Vagina (tissue), 2 donors: ENCODE measurements at regions of chr11 and their contacts with region 1.

Region 1: GRCh38 chr11:130574740-130575139 is 126.3 kb downstream of the ADAMTS15 start:
- DNase-seq: no peak
- H3K4me3 ChIP-seq: no peak overlapping the region
- H3K27ac ChIP-seq: no peak overlapping the region
- H3K4me1 ChIP-seq: no peaks in the 10 kb centered on the region
- H3K27me3 ChIP-seq: no peaks in the 10 kb centered on the region
- CTCF ChIP-seq: no peak
- POLR2A ChIP-seq: no peak

Region 2: GRCh38 chr11:129976328-129976727 is 598.4 kb before region 1 on chr11:
- intact Hi-C with region 1: loop called (anchors 5 kb)
- DNase-seq: no peak
- H3K4me3 ChIP-seq: no peak overlapping the region
- H3K27ac ChIP-seq: no peak overlapping the region
- H3K4me1 ChIP-seq: no peaks in the 10 kb centered on the region
- H3K27me3 ChIP-seq: no peaks in the 10 kb centered on the region
- CTCF ChIP-seq: no peak
- POLR2A ChIP-seq: no peak

Region 3: DNA sequence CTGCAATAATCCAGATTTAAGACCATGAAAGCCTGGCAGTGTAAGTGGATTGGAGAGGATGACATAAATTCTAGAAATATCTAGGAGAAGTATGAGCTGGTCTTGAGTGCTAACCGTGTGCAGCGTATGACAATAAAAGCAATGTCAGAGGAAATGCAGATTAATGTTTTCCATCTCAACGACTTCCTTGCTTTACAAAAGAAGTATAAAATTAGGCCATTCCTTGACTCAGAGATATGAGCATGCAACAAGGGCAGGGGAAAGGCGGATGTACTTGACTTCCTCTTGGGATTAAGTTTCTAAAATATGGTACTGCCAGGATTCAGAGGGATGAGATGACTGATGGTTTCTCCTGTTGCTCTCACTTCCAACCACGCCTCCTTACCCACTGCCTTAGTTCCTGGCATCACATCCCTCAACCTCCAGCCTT is 94.0 kb before region 1 on chr11:
- intact Hi-C with region 1: no loop called
- DNase-seq: no peak
- H3K4me3 ChIP-seq: no peak overlapping the region
- H3K27ac ChIP-seq: no peak overlapping the region
- H3K4me1 ChIP-seq: peaks cover 14% of the 10 kb centered on the region
- H3K27me3 ChIP-seq: no peaks in the 10 kb centered on the region
- CTCF ChIP-seq: no peak
- POLR2A ChIP-seq: no peak